ENCODE measurements at regions of chr16 and their contacts with region 1.

Region 1: DNA sequence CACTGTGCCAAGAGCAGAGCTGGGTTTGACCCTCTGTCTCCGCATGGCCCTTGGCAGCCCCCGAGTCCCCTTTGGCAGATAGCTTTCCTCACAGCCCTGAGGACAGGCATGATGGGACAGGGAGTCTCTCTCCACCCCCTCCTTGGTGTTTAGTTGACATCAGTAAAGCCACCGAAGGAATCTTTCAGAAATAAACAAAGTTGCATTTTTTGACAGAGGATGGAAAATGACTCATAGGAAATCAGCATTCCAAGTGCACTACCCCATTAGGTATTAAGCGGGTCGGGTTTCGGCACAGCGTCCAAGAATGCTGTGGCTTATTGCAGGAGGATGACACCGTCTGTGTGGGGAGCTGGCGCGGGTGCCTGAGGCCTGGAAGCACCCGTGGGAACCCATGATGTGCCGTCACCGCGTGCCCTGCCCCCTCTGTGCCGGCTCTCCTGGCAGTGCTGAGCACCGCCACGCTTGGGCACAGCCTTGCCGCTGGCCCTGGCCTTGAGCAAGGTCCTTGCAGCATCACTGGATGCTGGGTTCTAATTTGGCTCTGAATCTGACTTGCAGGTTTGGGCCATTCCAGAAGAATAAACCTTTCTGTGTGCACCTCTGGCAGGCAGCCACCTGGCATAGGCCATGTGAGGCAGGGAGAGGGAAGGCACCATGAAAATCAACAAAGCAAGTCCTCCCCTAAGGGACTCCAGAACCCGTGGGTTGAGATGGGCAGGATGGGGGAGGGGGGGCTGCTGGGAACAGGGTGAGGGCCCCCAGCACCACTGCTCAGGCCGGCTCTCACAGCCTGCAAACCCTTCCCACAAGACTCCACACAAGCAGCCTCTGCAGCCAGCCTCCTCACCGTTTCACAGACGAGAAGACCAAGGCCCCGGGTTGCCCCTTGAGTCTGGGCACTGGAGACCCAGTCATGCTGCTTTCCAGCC is 50.5 kb upstream of the ZNF469 start:
- DNase-seq: peak; percentile 97 to 98
- H3K4me3 ChIP-seq: peak overlapping the region; percentile 35; the same call in 1 of the 2 replicates
- H3K27ac ChIP-seq: peak overlapping the region; percentile 99
- H3K4me1 ChIP-seq: peaks cover 32% of the 10 kb centered on the region
- H3K27me3 ChIP-seq: no peaks in the 10 kb centered on the region
- CTCF ChIP-seq: no peak

Region 2: DNA sequence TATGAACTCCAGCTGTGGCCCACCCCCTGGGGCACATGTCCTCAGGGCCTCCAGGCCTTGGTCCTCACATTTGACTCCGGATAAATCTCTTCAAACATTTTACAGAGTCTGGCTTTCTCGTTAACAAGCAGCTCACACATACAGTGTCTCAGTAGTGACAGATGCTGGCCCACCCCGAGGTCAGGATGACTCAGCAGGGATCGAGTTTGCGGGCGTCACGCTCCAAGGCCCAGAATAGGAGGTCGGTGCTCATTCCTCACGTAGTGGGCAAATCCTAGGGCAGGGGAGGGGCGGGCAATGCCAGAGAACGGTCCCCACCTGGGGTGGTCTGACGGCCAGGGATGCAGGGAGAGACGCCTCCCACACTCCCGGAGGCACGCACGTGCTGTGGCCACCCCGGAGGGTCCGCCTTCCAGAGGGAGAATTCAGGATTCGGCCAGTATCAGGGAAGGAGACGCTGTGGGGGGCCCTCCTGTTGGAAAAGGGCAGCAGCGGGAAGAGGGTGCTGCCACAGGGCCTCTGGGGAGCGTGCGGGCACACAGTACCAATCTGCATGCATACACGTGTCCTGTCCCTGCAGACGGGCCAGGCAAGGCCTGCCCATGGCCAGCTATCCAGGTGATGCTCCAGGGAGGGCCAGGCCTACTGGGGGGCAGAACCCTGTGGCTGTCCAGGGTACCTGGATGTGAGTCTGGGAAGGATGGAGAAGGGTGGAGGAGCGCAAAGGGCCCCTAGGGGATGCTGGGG is 471.5 kb before region 1 on chr16:
- CTCF ChIA-PET with region 1: no interaction called
- POLR2A ChIA-PET with region 1: no interaction called
- intact Hi-C with region 1: loop called (anchors 5 kb)
- DNase-seq: peak; percentile 52 to 80
- H3K4me3 ChIP-seq: no peak overlapping the region
- H3K27ac ChIP-seq: no peak overlapping the region
- H3K4me1 ChIP-seq: peaks cover 47% of the 10 kb centered on the region
- H3K27me3 ChIP-seq: no peaks in the 10 kb centered on the region
- CTCF ChIP-seq: no peak

Region 3: GRCh38 chr16:88194397-88195268 is 137.6 kb before region 1 on chr16:
- CTCF ChIA-PET with region 1: no interaction called
- POLR2A ChIA-PET with region 1: no interaction called
- intact Hi-C with region 1: loop called (anchors 5 kb)
- DNase-seq: no peak
- H3K4me3 ChIP-seq: no peak overlapping the region
- H3K27ac ChIP-seq: no peak overlapping the region
- H3K4me1 ChIP-seq: no peaks in the 10 kb centered on the region
- H3K27me3 ChIP-seq: no peaks in the 10 kb centered on the region
- CTCF ChIP-seq: 0 out of 2 replicates have a peak, but pooled peaks have one; percentile 11

Region 4: GRCh38 chr16:88303890-88304819 is 28.1 kb before region 1 on chr16:
- CTCF ChIA-PET with region 1: no interaction called
- POLR2A ChIA-PET with region 1: no interaction called
- intact Hi-C with region 1: loop called (anchors 2 kb)
- DNase-seq: peak; percentile 49 to 73
- H3K4me3 ChIP-seq: no peak overlapping the region
- H3K27ac ChIP-seq: no peak overlapping the region
- H3K4me1 ChIP-seq: peaks cover 21% of the 10 kb centered on the region
- H3K27me3 ChIP-seq: no peaks in the 10 kb centered on the region
- CTCF ChIP-seq: no peak

Region 5: GRCh38 chr16:88383401-88384221 is 51.4 kb after region 1 on chr16:
- CTCF ChIA-PET with region 1: no interaction called
- POLR2A ChIA-PET with region 1: interaction called, 4 read pairs
- intact Hi-C with region 1: loop called (anchors 1 kb)
- DNase-seq: peak in 1 of 2 experiments; percentile 63
- H3K4me3 ChIP-seq: peak overlapping the region; percentile 60
- H3K27ac ChIP-seq: no peak overlapping the region
- H3K4me1 ChIP-seq: peaks cover 22% of the 10 kb centered on the region
- H3K27me3 ChIP-seq: peaks cover 5% of the 10 kb centered on the region; the same call in 1 of the 2 replicates
- CTCF ChIP-seq: peak; percentile 62

Region 6: GRCh38 chr16:88591577-88592021 is 259.3 kb after region 1 on chr16:
- CTCF ChIA-PET with region 1: no interaction called
- POLR2A ChIA-PET with region 1: no interaction called
- intact Hi-C with region 1: no loop called
- DNase-seq: peak in 1 of 2 experiments; percentile 26
- H3K4me3 ChIP-seq: no peak overlapping the region
- H3K27ac ChIP-seq: no peak overlapping the region
- H3K4me1 ChIP-seq: no peaks in the 10 kb centered on the region
- H3K27me3 ChIP-seq: no peaks in the 10 kb centered on the region
- CTCF ChIP-seq: no peak